Ascending aorta (tissue), 2 donors: ENCODE measurements at regions of chr15 and their contacts with region 1.

Region 1: DNA sequence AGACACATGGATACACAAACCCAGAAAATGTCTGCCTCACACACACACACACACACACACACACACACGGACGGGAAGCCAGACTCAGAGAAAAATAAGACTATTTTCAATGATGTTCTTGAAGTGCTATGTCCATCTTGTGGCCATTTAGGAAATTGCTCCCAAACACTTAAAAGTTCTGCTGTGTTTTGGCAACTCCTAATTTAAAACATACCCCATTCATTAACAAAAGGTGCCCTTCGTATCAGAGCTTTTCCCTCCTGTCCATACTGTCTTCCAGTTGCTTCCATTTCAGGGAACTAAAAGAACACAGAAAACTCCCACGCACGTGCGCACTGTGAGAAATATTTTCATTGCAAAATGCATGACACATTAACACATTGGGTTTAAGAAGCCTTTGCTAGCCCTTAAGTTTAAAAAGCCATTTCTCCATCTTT is 44.6 kb downstream of the SLC12A1 start:
- DNase-seq: peak in 1 of 2 donors; percentile 66
- H3K4me3 ChIP-seq: no peak overlapping the region
- H3K27ac ChIP-seq: peak overlapping the region in 1 of 2 donors; percentile 28
- H3K4me1 ChIP-seq: peaks cover 0 to 6% of the 10 kb centered on the region in 2 donors
- H3K27me3 ChIP-seq: no peaks in the 10 kb centered on the region
- CTCF ChIP-seq: peak; percentile 58 to 67 (median 63)

Region 2: GRCh38 chr15:47196057-47196456 is 1054.6 kb before region 1 on chr15:
- intact Hi-C with region 1: loop called (anchors 5 kb)
- DNase-seq: peak in 1 of 2 donors; percentile 85
- H3K4me3 ChIP-seq: no peak overlapping the region
- H3K27ac ChIP-seq: no peak overlapping the region
- H3K4me1 ChIP-seq: no peaks in the 10 kb centered on the region
- H3K27me3 ChIP-seq: no peaks in the 10 kb centered on the region
- CTCF ChIP-seq: peak; percentile 77 to 87 (median 81)

Region 3: DNA sequence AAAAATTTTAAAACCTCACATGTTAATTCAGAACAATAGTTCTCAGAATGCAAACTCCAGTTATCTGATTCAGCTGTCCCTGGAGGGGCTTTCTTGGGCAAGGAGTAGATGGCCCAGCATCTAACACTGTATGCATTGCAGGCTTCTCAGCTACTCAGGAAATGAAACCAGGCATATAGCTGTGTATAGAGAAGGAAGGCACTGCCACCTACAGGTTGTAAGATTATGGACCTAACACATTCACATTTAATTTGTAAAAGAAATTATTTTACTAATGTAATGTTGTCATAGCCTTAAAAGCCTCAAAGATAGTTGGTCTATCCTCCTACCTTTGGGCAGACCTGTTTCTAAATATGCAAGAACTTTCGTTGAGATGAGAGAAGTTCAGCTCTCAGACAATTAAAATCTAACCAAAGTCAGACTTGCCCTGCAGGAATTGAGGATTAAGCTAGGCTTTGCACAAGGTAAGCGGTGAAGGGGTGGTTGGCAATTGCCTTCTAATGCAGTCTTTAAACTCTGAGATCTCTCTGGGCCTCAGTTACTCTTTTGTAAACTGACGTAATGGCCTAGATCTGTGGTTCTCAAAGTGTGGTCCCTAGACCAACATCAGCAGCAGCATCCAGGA is 262.6 kb before region 1 on chr15:
- intact Hi-C with region 1: loop called (anchors 5 kb)
- DNase-seq: no peak
- H3K4me3 ChIP-seq: no peak overlapping the region
- H3K27ac ChIP-seq: no peak overlapping the region
- H3K4me1 ChIP-seq: no peaks in the 10 kb centered on the region
- H3K27me3 ChIP-seq: no peaks in the 10 kb centered on the region
- CTCF ChIP-seq: peak; percentile 52 to 71 (median 56)

Region 4: GRCh38 chr15:48112242-48112641 is 138.4 kb before region 1 on chr15:
- intact Hi-C with region 1: loop called (anchors 2 kb)
- DNase-seq: no peak
- H3K4me3 ChIP-seq: no peak overlapping the region
- H3K27ac ChIP-seq: no peak overlapping the region
- H3K4me1 ChIP-seq: peaks cover 0 to 5% of the 10 kb centered on the region in 2 donors
- H3K27me3 ChIP-seq: no peaks in the 10 kb centered on the region
- CTCF ChIP-seq: peak; percentile 12 to 49 (median 28)

Region 5: GRCh38 chr15:48177766-48178647 is 72.7 kb before region 1 on chr15 and contains the start of gene MYEF2:
- intact Hi-C with region 1: loop called (anchors 2 kb)
- DNase-seq: peak; percentile 15 to 84
- H3K4me3 ChIP-seq: peak within 1 kb of the TSS; percentile 63 to 80
- H3K27ac ChIP-seq: peak within 1 kb of the TSS; percentile 92 to 96
- H3K4me1 ChIP-seq: peaks cover 0 to 6% of the 10 kb centered on the region in 2 donors
- H3K27me3 ChIP-seq: no peaks in the 10 kb centered on the region
- CTCF ChIP-seq: no peak
- total RNA-seq, gene MYEF2: 13.6 TPM